ENCODE measurements at regions of chr19 and their contacts with region 1.

Region 1: DNA sequence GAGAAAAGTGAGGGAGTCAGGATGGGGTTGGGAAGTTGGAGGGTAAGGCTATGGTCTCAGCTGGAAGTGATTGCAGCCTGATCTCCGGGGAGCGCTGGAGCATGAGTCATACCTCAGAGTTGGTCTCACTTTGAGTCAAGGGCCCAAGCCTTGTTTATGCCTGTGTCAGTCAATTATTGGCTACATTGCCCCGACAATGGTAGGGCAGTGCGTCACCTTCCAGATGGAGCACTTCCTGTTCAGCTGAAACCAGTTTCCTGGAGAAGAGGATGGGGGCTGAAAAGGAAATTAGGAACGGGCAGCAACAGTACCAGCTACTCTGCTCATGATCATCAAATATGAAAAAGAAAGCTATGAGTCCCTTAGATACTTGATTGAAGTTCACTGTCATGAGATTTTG is 60.4 kb downstream of the ADGRE1 start:
- DNase-seq: peak; percentile 82
- H3K4me3 Mint-ChIP-seq: peak overlapping the region; percentile 23
- H3K27ac Mint-ChIP-seq: peak overlapping the region; percentile 63
- H3K4me1 Mint-ChIP-seq: peaks cover 17% of the 10 kb centered on the region
- H3K27me3 Mint-ChIP-seq: no peaks in the 10 kb centered on the region

Region 2: DNA sequence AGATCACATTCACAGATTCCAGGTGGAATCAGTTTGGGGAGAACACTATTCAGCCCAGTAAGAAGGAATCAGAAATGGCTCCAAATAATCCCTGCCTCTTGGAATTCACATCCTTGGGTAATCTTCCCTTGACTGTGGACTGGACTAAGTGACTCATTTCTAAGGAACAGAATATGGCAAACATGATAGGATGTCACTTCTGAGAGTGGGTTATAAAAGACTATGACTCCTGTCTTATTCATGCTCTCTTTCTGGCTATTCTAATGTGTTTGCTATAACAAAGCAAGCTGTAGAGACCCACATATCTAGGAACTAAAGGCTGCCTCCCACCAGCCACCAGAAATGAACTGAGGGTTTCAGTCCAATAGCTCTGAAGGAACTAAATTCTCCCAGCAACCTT is 35.7 kb after region 1 on chr19:
- CTCF ChIA-PET with region 1: no interaction called
- intact Hi-C with region 1: loop called (anchors 5 kb)
- DNase-seq: no peak
- H3K4me3 Mint-ChIP-seq: no peak overlapping the region
- H3K27ac Mint-ChIP-seq: no peak overlapping the region
- H3K4me1 Mint-ChIP-seq: no peaks in the 10 kb centered on the region
- H3K27me3 Mint-ChIP-seq: no peaks in the 10 kb centered on the region

Region 3: GRCh38 chr19:7004313-7004931 is 56.7 kb after region 1 on chr19:
- CTCF ChIA-PET with region 1: no interaction called
- intact Hi-C with region 1: loop called (anchors 2 kb)
- DNase-seq: peak; percentile 31
- H3K4me3 Mint-ChIP-seq: no peak overlapping the region
- H3K27ac Mint-ChIP-seq: no peak overlapping the region
- H3K4me1 Mint-ChIP-seq: peaks cover 36% of the 10 kb centered on the region
- H3K27me3 Mint-ChIP-seq: no peaks in the 10 kb centered on the region

Measured in activated naive CD4-positive, alpha-beta T cell treated with anti-CD3 and anti-CD28 coated beads for 36 hours (primary cell).